ENCODE measurements at regions of chr3 and their contacts with region 1.

Region 1: DNA sequence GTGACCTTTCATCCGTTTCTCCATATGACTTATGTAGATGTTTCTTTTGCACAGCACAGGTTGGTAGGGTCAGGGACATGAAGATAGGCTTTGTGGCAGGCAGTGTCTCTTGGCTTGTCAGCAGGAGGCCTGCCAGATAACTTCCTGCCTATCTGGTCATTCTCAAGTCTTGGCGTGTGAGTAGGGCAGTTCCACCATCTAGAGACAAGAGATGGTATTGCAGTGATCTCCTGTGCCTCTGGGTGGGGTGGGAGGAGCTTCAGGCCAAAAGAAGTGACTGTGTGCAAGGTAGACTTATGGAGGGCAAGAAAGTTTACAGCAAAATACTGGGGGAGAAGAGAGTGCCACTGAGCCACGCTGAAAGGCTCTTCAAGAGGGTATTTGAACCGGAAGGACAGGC is 11.0 kb downstream of the TEX264 start:
- DNase-seq: peak; percentile 83
- ATAC-seq: peak; percentile 86
- H3K4me3 Mint-ChIP-seq: no peak overlapping the region
- H3K27ac Mint-ChIP-seq: peak overlapping the region; percentile 80
- H3K4me1 Mint-ChIP-seq: peaks cover 92% of the 10 kb centered on the region
- H3K27me3 Mint-ChIP-seq: no peaks in the 10 kb centered on the region

Region 2: GRCh38 chr3:51637941-51638471 is 44.1 kb before region 1 on chr3:
- CTCF ChIA-PET with region 1: interaction called, 4 read pairs
- POLR2A ChIA-PET with region 1: no interaction called
- intact Hi-C with region 1: loop called (anchors 1 kb)
- DNase-seq: peak; percentile 55
- ATAC-seq: peak; percentile 83
- H3K4me3 Mint-ChIP-seq: no peak overlapping the region
- H3K27ac Mint-ChIP-seq: no peak overlapping the region
- H3K4me1 Mint-ChIP-seq: no peaks in the 10 kb centered on the region
- H3K27me3 Mint-ChIP-seq: no peaks in the 10 kb centered on the region

Region 3: DNA sequence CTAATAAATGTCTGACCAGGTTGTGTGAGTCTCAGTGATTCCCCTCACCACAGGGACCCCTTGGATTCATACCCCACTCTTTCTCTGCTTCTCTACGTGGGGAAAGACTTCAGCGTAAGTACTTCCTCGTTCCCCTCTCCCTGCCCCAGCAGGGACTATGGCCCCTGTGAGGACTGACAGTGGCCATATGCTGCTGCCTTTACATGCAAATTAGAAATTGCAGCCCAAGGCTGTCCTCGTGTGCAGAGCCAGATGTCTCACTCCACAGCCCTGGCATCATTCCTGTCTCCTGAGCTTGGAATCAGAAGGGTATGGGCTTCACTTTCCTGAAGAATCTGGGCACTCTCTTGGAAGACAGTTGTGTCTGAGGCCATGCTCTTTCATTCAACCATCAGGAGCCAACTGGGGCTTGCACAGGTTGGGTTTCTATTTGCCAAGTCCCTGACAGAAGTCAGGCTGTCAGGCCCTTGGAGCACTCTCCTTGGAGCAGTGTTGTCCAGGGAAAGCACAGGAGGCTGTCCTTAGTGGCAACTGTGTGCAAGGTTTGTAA is 148.8 kb after region 1 on chr3:
- CTCF ChIA-PET with region 1: interaction called, 4 read pairs
- POLR2A ChIA-PET with region 1: interaction called, 10 read pairs
- intact Hi-C with region 1: no loop called
- DNase-seq: no peak
- ATAC-seq: no peak
- H3K4me3 Mint-ChIP-seq: no peak overlapping the region
- H3K27ac Mint-ChIP-seq: no peak overlapping the region
- H3K4me1 Mint-ChIP-seq: no peaks in the 10 kb centered on the region
- H3K27me3 Mint-ChIP-seq: peaks cover 25% of the 10 kb centered on the region

Measured in activated CD4-positive, alpha-beta T cell treated with anti-CD3 and anti-CD28 coated beads for 36 hours (primary cell).